OCI-LY7 (cell line): ENCODE measurements at regions of chr10 and their contacts with region 1.

Region 1: GRCh38 chr10:15719899-15720634 is at the start of gene ITGA8:
- DNase-seq: no peak
- H3K4me3 ChIP-seq: no peak within 1 kb of the TSS
- H3K27ac ChIP-seq: no peak within 1 kb of the TSS
- H3K4me1 ChIP-seq: no peaks in the 10 kb centered on the region
- CTCF ChIP-seq: no peak
- total RNA-seq, gene ITGA8: not detected in 2 replicates

Region 2: DNA sequence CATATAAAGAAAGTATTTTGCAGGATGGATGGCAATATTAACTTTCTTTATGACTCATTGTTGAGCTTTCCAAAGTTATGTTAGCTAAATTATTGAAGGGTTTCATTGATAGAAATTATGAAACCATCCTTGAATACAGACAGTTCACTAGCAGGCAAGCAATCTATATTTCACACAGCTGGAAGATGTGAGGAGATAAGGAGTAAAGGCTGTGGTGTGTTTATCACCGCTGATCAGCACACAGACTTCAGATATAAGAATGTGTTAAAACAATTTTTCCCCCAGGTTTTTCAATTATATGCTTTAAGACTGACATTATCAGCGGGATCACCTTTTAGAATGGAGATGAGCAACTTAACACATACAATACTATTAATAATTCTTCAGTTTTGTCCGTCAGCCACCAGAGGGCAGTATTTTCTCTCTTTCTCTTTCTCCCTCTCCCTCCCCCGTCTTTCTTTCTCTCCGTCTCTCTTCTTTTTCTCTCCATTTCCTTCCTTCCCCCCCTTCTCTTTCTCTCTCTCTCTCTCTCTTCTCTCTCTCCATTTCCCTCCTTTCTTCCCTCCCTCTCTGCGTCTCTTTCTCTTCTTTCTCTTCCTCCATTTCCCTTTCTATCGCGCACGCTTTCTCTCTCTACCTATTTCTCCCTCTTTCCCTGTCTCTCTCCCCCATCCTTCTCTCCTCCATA is 286.1 kb before region 1 on chr10:
- CTCF ChIA-PET with region 1: no interaction called
- POLR2A ChIA-PET with region 1: no interaction called
- intact Hi-C with region 1: loop called (anchors 10 kb)
- DNase-seq: peak; percentile 54
- H3K4me3 ChIP-seq: no peak overlapping the region
- H3K27ac ChIP-seq: no peak overlapping the region
- H3K4me1 ChIP-seq: no peaks in the 10 kb centered on the region
- CTCF ChIP-seq: peak; percentile 80